ENCODE measurements at regions of chr19 and their contacts with region 1.

Region 1: GRCh38 chr19:2475702-2476450 is at the start of gene GADD45B:
- DNase-seq: peak; percentile 95 to 98 (median 97)
- ATAC-seq: peak; percentile 57
- H3K4me3 ChIP-seq: peak within 1 kb of the TSS; percentile 98 to 100
- H3K4me3 Mint-ChIP-seq: peak within 1 kb of the TSS; percentile 99
- H3K27ac ChIP-seq: peak within 1 kb of the TSS; percentile 69 to 85
- H3K27ac Mint-ChIP-seq: peak within 1 kb of the TSS; percentile 87
- H3K4me1 ChIP-seq: peaks cover 30% of the 10 kb centered on the region
- H3K4me1 Mint-ChIP-seq: peaks cover 24% of the 10 kb centered on the region
- H3K27me3 ChIP-seq: no peaks in the 10 kb centered on the region
- H3K27me3 Mint-ChIP-seq: no peaks in the 10 kb centered on the region
- CTCF ChIP-seq: no peak
- total RNA-seq, gene GADD45B: 441 to 446 TPM

Region 2: GRCh38 chr19:2084993-2085720 is 390.7 kb before region 1 on chr19:
- CTCF ChIA-PET with region 1: no interaction called
- POLR2A ChIA-PET with region 1: no interaction called
- intact Hi-C with region 1: loop called in 1 of 2 experiments (anchors 5 kb)
- DNase-seq: peak; percentile 85 to 99 (median 94)
- ATAC-seq: peak; percentile 51
- H3K4me3 ChIP-seq: peak overlapping the region; percentile 73 to 82
- H3K4me3 Mint-ChIP-seq: peak overlapping the region; percentile 98
- H3K27ac ChIP-seq: peak overlapping the region; percentile 89 to 95
- H3K27ac Mint-ChIP-seq: peak overlapping the region; percentile 98
- H3K4me1 ChIP-seq: peaks cover 73% of the 10 kb centered on the region
- H3K4me1 Mint-ChIP-seq: peaks cover 76% of the 10 kb centered on the region
- H3K27me3 ChIP-seq: no peaks in the 10 kb centered on the region
- H3K27me3 Mint-ChIP-seq: no peaks in the 10 kb centered on the region
- CTCF ChIP-seq: no peak

Region 3: DNA sequence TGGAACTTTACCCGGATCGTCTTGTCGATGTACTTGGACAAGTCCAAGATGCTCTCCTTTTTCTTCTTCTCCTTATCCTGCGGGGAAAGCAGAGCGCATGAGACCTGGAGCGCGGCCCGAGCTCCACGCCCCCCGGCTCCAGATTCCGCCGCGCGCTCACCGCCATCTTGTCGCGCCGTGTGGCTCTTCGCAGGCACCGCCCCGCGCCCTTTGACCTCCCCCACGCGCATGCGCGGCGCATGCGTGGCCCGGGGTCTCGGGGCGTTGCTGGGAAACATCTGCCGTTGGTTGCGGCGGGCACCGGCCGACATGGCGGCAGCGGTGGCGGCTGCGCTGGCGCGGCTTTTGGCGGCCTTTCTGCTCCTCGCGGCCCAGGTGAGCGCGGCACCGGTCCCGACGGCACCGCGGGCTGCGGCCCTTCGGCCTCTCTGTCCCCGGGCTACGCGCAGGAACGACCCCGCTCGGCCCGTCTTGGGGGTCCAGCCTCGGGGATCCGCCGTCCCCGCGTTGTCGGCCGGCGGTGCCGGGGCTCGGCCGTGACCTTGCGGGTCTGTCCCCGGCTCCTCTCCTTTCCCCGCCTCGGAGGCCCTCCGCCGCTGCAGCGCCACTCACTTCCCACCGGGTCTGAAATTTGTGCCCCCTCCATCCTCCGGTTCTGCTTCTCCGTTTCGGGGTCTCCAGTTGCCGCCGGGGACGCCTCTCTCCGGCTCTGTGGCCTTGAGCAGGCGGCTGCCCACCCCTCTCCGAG is 147.3 kb before region 1 on chr19 and contains the starts of genes LSM7 and SPPL2B:
- CTCF ChIA-PET with region 1: no interaction called
- POLR2A ChIA-PET with region 1: no interaction called
- intact Hi-C with region 1: no loop called
- DNase-seq: peak; percentile 81 to 96 (median 93)
- ATAC-seq: peak; percentile 62
- H3K4me3 ChIP-seq: peak within 1 kb of the TSS; percentile 77 to 93
- H3K4me3 Mint-ChIP-seq: peak within 1 kb of the TSS; percentile 97
- H3K27ac ChIP-seq: peak within 1 kb of the TSS; percentile 71 to 82
- H3K27ac Mint-ChIP-seq: peak within 1 kb of the TSS; percentile 99
- H3K4me1 ChIP-seq: peaks cover 60% of the 10 kb centered on the region
- H3K4me1 Mint-ChIP-seq: peaks cover 62% of the 10 kb centered on the region
- H3K27me3 ChIP-seq: no peaks in the 10 kb centered on the region
- H3K27me3 Mint-ChIP-seq: no peaks in the 10 kb centered on the region
- CTCF ChIP-seq: no peak
- total RNA-seq, gene LSM7: 103 to 113 TPM
- total RNA-seq, gene SPPL2B: 123 to 126 TPM

Region 4: DNA sequence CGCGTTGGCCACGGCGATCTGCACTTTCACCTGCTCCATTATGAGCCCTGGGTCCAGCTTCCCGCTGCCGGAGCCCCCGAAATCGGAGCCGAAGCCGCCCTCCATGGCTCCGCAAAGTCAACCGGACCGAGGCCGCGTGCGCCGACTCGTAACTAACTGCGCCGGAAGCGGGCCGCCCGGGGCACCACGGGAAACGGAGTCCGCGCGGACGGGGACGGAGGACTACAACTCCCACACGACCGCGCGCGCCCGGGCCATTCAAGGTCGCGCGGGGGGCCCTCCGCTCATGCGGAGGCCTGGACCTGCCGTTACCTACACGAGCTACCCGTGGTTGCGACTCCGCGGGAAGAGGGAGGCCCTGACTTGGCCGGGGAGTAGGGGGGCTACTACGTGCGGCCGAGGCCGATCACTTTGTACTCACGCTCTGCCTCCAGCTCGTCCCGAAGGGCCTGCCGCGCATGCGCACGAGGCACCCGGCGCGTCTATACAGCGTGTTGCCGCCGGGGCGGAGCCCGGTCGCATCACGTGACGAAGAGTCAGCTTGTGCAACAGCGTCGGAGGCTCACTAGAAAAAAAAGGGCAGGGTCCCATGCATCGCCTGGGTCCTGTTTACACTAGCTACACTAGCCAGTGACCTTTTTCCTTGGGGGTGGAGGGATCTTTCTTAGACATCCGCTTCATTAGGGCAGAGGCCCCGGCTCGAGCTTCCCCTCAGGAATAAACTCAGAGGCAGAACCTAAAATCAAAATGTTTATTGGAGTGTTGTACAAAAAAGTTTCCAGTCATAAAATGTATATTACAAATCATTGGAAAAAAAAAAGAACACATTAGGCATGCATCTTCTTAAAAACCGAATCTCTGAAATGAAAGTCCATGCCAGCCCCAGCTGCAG is 48.2 kb before region 1 on chr19 and contains the start of gene TIMM13:
- CTCF ChIA-PET with region 1: interaction called, 3 read pairs
- POLR2A ChIA-PET with region 1: interaction called, 21 read pairs
- intact Hi-C with region 1: no loop called
- DNase-seq: peak; percentile 91 to 98 (median 96)
- ATAC-seq: peak; percentile 94
- H3K4me3 ChIP-seq: peak within 1 kb of the TSS; percentile 92 to 98
- H3K4me3 Mint-ChIP-seq: peak within 1 kb of the TSS; percentile 95
- H3K27ac ChIP-seq: peak within 1 kb of the TSS; percentile 96 to 99
- H3K27ac Mint-ChIP-seq: peak within 1 kb of the TSS; percentile 98
- H3K4me1 ChIP-seq: peaks cover 19% of the 10 kb centered on the region
- H3K4me1 Mint-ChIP-seq: peaks cover 13% of the 10 kb centered on the region
- H3K27me3 ChIP-seq: no peaks in the 10 kb centered on the region
- H3K27me3 Mint-ChIP-seq: no peaks in the 10 kb centered on the region
- CTCF ChIP-seq: no peak
- total RNA-seq, gene TIMM13: 21.5 to 24.4 TPM

Region 5: DNA sequence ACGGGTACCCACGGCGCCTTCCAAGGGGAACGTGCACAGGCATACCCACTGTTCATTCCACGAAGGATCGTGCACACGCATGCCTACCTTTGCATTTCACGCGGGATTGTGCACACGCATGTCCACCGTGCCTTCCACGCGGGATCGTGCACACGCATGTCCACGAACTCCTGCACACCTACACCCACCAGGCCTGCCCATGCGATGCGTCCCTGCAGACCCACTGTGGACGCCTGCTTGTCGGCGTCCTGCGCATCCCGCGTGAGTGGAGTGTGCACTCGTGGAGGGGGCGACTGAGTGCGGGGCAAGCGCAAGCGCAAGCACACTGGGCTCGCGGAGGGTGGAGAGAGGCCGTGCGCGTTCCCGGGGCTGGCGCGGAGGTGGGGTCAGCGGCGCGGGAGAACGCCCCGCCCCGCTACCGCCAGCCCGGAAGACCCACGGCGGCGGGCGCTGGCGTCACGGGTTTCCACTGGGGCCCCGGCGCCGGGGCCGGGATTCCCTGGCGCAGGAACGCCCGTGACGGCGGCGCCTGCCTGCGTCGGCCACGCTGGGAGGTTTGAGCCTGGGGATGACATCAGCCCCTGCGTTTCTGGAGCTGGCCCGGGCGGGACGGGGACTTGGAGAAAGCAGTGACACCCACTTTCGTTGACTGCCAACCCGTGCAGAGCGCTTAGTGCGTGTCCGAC is 18.7 kb after region 1 on chr19:
- CTCF ChIA-PET with region 1: interaction called, 5 read pairs
- POLR2A ChIA-PET with region 1: interaction called, 51 read pairs
- intact Hi-C with region 1: no loop called
- DNase-seq: peak; percentile 8 to 85 (median 67)
- ATAC-seq: peak; percentile 81
- H3K4me3 ChIP-seq: peak overlapping the region; percentile 73 to 85
- H3K4me3 Mint-ChIP-seq: peak overlapping the region; percentile 77
- H3K27ac ChIP-seq: peak overlapping the region; percentile 54 to 55
- H3K27ac Mint-ChIP-seq: peak overlapping the region; percentile 10
- H3K4me1 ChIP-seq: peaks cover 22% of the 10 kb centered on the region
- H3K4me1 Mint-ChIP-seq: peaks cover 36% of the 10 kb centered on the region
- H3K27me3 ChIP-seq: peaks cover 10% of the 10 kb centered on the region in 2 experiments
- H3K27me3 Mint-ChIP-seq: peaks cover 21% of the 10 kb centered on the region
- CTCF ChIP-seq: no peak

Region 6: GRCh38 chr19:2543463-2544442 is 67.9 kb after region 1 on chr19:
- CTCF ChIA-PET with region 1: interaction called, 3 read pairs
- POLR2A ChIA-PET with region 1: interaction called, 39 read pairs
- intact Hi-C with region 1: no loop called
- DNase-seq: peak; percentile 30 to 78 (median 67)
- ATAC-seq: peak; percentile 89
- H3K4me3 ChIP-seq: peak overlapping the region; percentile 33 to 37
- H3K4me3 Mint-ChIP-seq: peak overlapping the region; percentile 79
- H3K27ac ChIP-seq: no peak overlapping the region
- H3K27ac Mint-ChIP-seq: peak overlapping the region; percentile 73
- H3K4me1 ChIP-seq: peaks cover 15% of the 10 kb centered on the region
- H3K4me1 Mint-ChIP-seq: peaks cover 17% of the 10 kb centered on the region
- H3K27me3 ChIP-seq: no peaks in the 10 kb centered on the region
- H3K27me3 Mint-ChIP-seq: no peaks in the 10 kb centered on the region
- CTCF ChIP-seq: no peak

Region 7: GRCh38 chr19:2578901-2579677 is 103.2 kb after region 1 on chr19:
- CTCF ChIA-PET with region 1: interaction called, 40 read pairs
- POLR2A ChIA-PET with region 1: interaction called, 45 read pairs
- intact Hi-C with region 1: loop called in 1 of 2 experiments (anchors 1 kb)
- DNase-seq: peak; percentile 44 to 81 (median 69)
- ATAC-seq: peak; percentile 54
- H3K4me3 ChIP-seq: peak overlapping the region; percentile 4 to 49
- H3K4me3 Mint-ChIP-seq: peak overlapping the region; percentile 45
- H3K27ac ChIP-seq: no peak overlapping the region
- H3K27ac Mint-ChIP-seq: no peak overlapping the region
- H3K4me1 ChIP-seq: peaks cover 11% of the 10 kb centered on the region
- H3K4me1 Mint-ChIP-seq: peaks cover 2% of the 10 kb centered on the region
- H3K27me3 ChIP-seq: peaks cover 0 to 5% of the 10 kb centered on the region in 2 experiments
- H3K27me3 Mint-ChIP-seq: no peaks in the 10 kb centered on the region
- CTCF ChIP-seq: peak; percentile 44

Region 8: GRCh38 chr19:2618611-2619010 is 142.7 kb after region 1 on chr19:
- CTCF ChIA-PET with region 1: interaction called, 380 read pairs
- POLR2A ChIA-PET with region 1: interaction called, 145 read pairs
- intact Hi-C with region 1: no loop called
- DNase-seq: peak in 8 of 9 experiments; percentile 55 to 86 (median 76)
- ATAC-seq: no peak
- H3K4me3 ChIP-seq: peak overlapping the region in 1 of 2 experiments; percentile 26
- H3K4me3 Mint-ChIP-seq: peak overlapping the region; percentile 75
- H3K27ac ChIP-seq: peak overlapping the region; percentile 37 to 51
- H3K27ac Mint-ChIP-seq: peak overlapping the region; percentile 92
- H3K4me1 ChIP-seq: peaks cover 66% of the 10 kb centered on the region
- H3K4me1 Mint-ChIP-seq: peaks cover 66% of the 10 kb centered on the region
- H3K27me3 ChIP-seq: no peaks in the 10 kb centered on the region
- H3K27me3 Mint-ChIP-seq: no peaks in the 10 kb centered on the region
- CTCF ChIP-seq: no peak